Activated CD4-positive, alpha-beta T cell treated with anti-CD3 and anti-CD28 coated beads, Interleukin-2, amount 10 ng/mL, durations not matched to agents 24 days and 14 days (primary cell): ENCODE measurements at regions of chr6 and their contacts with region 1.

Region 1: DNA sequence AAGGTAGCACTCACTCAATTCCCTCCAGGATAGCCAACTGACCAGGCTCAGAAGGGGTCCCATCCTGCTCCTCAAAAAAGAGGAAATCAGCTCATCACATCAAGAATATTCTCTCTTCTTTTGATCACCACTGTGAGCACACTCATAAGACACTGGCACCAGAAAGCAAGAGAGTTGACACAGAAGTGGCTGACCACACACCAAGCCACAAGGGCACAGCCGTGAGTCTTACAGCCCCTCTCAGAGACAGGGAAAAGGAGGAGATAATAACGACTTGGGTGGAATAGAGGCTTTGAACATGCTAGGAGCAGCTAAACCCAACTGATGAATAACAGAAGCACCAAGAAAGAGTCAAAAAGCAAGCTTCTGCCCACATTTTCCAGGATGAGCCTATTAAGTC is 249.1 kb upstream of the PREP start:
- DNase-seq: no peak
- H3K4me3 Mint-ChIP-seq: no peak overlapping the region
- H3K27ac Mint-ChIP-seq: no peak overlapping the region
- H3K4me1 Mint-ChIP-seq: peaks cover 41% of the 10 kb centered on the region
- H3K27me3 Mint-ChIP-seq: peaks cover 2% of the 10 kb centered on the region

Region 2: GRCh38 chr6:105781915-105782314 is 129.9 kb after region 1 on chr6:
- intact Hi-C with region 1: loop called (anchors 2 kb)
- DNase-seq: peak; percentile 75
- H3K4me3 Mint-ChIP-seq: peak overlapping the region; percentile 26
- H3K27ac Mint-ChIP-seq: peak overlapping the region; percentile 68
- H3K4me1 Mint-ChIP-seq: peaks cover 43% of the 10 kb centered on the region
- H3K27me3 Mint-ChIP-seq: no peaks in the 10 kb centered on the region